ENCODE measurements at regions of chr5 and their contacts with region 1.

Region 1: DNA sequence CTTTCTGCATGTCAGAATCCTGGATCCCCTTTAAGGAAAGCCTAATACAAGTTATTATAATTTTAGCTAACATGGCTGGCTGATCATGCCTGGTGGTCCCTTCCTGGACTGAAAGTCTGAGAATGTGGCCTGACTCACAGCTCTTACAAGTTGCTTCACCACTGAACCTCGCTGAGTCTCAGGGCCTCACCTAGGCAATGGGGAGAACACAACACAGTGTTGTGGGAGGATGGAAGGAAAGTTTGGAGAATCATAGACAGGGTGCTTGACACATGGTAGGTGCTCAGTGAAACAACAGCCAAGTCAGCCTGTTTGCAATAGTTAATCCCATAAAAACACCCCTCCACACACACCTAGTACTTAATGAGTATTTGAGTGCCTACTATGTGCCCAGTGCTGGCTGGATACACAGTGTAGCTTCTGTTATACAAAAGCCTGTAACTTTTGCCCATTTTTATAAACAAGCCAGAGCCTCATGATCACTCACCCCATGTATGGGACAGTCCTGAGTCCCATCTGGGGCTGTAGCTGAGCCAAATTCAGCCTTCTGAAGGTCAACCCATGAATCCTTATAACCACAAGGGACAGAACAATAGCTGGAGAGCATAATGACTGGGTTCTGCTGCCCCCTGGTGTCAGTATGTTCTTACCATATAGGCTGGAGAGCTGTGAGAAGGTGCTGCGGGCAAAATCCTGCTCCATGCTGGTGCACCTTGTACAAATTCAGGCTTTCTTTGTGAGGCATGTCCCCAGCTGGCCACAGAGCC is 3.9 kb downstream of the ACSL6 start:
- DNase-seq: peak; percentile 72
- ATAC-seq: peak; percentile 70

Region 2: GRCh38 chr5:131589510-131590348 is 417.9 kb before region 1 on chr5:
- intact Hi-C with region 1: loop called (anchors 2 kb)
- DNase-seq: no peak
- ATAC-seq: peak; percentile 64

Region 3: DNA sequence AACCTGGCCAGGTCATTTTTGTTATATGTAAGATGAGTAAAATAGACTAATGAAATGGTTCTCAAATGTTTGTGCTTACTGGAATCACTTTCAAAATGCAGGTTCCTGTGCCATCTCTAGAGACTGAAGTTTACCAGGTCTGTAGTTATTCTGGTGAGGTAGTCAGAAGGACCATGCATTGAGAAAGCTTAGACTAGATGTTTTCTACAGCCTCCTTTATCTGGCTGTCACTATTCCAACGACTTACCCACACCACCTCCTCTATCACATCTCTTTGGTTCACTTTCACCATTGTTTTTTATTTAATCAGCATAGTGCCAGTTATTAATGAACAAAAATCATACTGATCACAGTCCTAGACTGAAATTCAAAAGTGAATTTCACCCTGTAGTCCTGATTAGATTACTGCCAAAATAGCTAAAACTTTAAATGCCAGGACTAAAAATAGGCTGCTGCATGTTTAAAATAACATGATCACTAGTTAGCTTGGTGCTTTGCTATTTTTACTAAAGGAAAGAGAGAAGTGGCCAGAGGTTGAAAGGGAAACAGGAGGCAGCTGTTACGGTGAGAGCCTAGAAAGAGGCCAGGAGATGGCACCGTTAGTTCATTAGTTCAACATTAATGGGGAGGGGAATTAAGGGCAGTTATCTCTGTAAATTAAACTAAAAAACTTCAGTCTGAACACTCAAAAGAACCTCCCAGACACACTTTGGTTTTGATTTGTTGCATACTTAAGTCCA is 196.9 kb before region 1 on chr5:
- intact Hi-C with region 1: loop called (anchors 5 kb)
- DNase-seq: no peak
- ATAC-seq: peak; percentile 95